ENCODE measurements at regions of chr3 and their contacts with region 1.

Region 1: DNA sequence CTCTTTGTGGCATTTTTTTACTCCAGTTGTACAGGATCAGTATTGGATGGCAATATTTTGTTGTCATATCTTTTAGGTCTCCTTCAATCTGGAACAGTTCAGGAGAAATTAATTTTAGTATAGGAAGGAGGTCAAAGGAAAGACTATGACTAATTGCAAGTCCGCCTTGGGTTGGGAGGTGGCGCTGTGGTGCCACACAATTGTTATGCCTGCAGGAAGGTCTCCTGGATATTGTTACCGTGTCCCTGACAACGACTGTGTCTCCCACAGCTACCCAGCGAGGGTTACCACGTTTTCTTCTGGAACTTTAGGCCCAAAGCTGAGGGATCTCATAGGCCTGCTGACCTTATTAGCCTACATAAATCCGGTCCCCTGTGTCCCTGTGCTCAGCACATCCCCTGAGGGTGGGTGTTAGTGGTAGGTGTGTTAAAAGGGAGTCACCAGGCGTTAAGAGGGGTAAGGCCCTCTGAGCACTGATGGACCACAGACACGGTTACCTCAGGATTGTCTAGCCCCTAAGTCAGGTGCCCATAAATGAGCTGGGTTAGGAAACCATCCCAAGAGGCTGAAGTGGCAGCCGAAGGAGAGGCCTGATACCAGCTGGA is 31.5 kb downstream of the KCNAB1 start:
- DNase-seq: peak in 1 of 2 donors; percentile 28
- ATAC-seq: no peak
- H3K4me3 ChIP-seq: no peak overlapping the region
- H3K27ac ChIP-seq: no peak overlapping the region
- H3K4me1 ChIP-seq: peaks cover 9 to 20% of the 10 kb centered on the region in 2 donors
- H3K27me3 ChIP-seq: no peaks in the 10 kb centered on the region
- CTCF ChIP-seq: peak in 4 of 5 experiments; percentile 31 to 57 (median 46)
- POLR2A ChIP-seq: no peak

Region 2: GRCh38 chr3:156291272-156292123 is 139.6 kb after region 1 on chr3:
- in situ Hi-C with region 1: no loop called
- intact Hi-C with region 1: no loop called
- DNase-seq: peak; percentile 12 to 14
- ATAC-seq: no peak
- H3K4me3 ChIP-seq: peak overlapping the region in 3 of 4 donors; percentile 31 to 48 (median 34)
- H3K27ac ChIP-seq: no peak overlapping the region
- H3K4me1 ChIP-seq: no peaks in the 10 kb centered on the region
- H3K27me3 ChIP-seq: peaks cover 24 to 31% (median 26%) of the 10 kb centered on the region in 3 donors
- CTCF ChIP-seq: no peak
- POLR2A ChIP-seq: no peak

Region 3: DNA sequence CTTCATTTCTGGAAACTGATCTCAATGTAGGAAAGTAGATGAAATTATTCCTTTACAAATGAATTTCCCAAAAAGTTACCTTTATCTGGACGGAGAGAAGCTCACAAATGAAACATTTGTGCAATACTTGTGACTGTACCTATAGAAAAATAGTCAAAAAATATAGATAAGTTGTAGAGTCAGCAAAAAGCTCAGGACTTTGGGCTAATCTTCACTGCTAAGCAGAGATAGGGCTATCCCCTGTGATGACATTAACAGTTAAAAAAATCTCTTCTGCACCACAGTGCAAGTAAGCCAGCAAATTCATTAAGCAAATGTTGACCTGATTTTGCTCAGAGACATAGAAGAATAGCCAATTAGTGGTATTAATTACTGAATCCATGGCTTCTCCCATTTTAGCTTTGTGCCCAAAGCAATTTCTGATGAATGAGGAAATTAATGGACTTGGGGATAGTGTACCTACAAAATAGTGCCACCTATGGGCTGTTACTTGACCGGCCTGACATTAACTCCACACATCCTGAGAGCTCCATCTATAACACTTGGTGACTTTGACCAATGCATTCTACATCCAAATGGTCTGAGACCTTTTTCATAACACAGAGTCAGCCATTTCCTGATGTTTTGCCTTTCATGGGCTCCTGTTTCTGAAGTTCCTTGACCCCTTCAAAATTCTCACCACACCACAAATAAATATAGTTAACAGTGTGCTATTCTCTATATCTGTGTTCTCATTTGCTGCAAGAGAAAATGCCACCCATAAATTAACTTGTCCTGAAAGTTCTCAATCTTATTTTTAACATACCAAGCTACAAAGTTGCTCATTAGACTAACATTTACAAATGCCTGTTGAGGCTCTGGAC is 298.0 kb after region 1 on chr3:
- in situ Hi-C with region 1: no loop called
- intact Hi-C with region 1: loop called (anchors 2 kb)
- DNase-seq: no peak
- ATAC-seq: no peak
- H3K4me3 ChIP-seq: no peak overlapping the region
- H3K27ac ChIP-seq: no peak overlapping the region
- H3K4me1 ChIP-seq: no peaks in the 10 kb centered on the region
- H3K27me3 ChIP-seq: no peaks in the 10 kb centered on the region
- CTCF ChIP-seq: peak in 1 of 5 experiments; percentile 45
- POLR2A ChIP-seq: no peak

Region 4: DNA sequence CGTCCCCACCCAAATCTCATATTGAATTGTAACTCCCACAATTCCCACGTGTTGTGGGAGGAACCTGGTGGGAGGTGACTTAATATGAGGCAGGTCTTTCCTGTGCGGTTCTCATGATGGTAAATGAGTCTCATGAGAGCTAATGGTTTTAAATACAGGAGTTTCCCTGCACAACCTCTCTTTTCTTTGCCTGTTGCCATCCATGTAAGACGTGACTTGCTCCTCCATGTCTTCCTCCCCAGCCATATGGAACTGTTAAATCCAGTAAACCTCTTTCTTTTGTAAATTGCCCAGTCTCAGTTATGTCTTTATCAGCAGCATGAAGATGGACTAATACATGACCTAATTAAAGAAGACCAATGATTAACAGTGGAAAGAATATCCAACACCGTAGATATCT is 346.4 kb after region 1 on chr3:
- in situ Hi-C with region 1: loop called in 3 of 4 experiments (anchors 10 kb)
- intact Hi-C with region 1: loop called (anchors 1 kb)
- DNase-seq: no peak
- ATAC-seq: no peak
- H3K4me3 ChIP-seq: no peak overlapping the region
- H3K27ac ChIP-seq: no peak overlapping the region
- H3K4me1 ChIP-seq: no peaks in the 10 kb centered on the region
- H3K27me3 ChIP-seq: no peaks in the 10 kb centered on the region
- CTCF ChIP-seq: no peak
- POLR2A ChIP-seq: no peak

Region 5: DNA sequence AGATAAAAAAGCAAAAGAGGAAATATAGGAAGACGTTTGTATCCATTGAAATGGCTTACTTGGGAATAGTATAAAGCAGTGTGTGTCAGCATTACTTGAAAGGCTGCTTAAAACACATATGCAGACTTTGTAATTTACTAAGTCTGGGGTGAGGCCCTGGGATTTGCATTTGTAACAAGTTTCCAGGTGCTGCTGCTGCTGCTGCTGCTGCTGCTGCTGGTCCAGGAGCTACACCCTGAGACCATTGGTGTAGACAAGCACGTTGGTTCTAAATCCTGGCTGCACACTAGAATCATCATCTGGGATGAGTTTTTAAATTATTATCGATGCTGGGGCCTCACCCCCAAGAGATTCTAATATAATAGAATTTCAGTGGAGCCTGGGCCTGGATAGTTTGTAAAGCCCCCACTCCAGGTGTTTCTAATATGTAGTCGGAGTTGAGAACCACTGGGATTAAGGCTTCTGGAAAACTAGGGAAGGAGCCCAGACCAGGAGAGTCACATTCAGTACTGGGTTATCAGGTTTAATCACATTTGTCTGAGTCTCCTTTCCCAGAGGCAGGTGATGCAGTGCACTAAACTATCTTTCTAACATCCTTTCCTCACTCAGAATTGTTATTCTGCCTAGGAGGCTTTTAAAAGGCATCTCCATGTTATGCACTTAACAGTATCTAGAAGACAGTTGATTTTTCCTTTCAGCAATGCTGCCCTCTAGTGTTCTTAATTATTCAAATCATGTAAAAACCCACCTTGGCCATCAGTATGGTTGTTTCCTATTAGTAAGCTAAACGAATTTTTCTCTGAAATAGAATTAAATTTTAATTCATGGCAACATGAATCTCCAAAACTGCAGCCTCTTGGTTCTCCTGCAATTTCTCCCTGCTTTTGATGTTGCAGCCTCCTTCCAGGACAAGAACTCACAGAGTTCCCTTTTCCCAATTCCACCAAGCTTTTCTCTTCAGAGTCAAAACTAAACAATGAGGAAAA is 357.6 kb after region 1 on chr3:
- in situ Hi-C with region 1: loop called (anchors 5 to 10 kb)
- intact Hi-C with region 1: loop called (anchors 1 kb)
- DNase-seq: no peak
- ATAC-seq: peak; percentile 74 to 76
- H3K4me3 ChIP-seq: no peak overlapping the region
- H3K27ac ChIP-seq: no peak overlapping the region
- H3K4me1 ChIP-seq: no peaks in the 10 kb centered on the region
- H3K27me3 ChIP-seq: no peaks in the 10 kb centered on the region
- CTCF ChIP-seq: peak; percentile 29 to 63 (median 45)
- POLR2A ChIP-seq: no peak

Region 6: GRCh38 chr3:156535162-156535627 is 383.3 kb after region 1 on chr3:
- in situ Hi-C with region 1: loop called in 1 of 4 experiments (anchors 10 kb)
- intact Hi-C with region 1: loop called (anchors 2 kb)
- DNase-seq: peak; percentile 51 to 66
- ATAC-seq: peak; percentile 96 to 98
- H3K4me3 ChIP-seq: no peak overlapping the region
- H3K27ac ChIP-seq: peak overlapping the region; percentile 45 to 65 (median 56)
- H3K4me1 ChIP-seq: peaks cover 0 to 7% of the 10 kb centered on the region in 2 donors
- H3K27me3 ChIP-seq: no peaks in the 10 kb centered on the region
- CTCF ChIP-seq: no peak
- POLR2A ChIP-seq: peak in 1 of 2 donors; percentile 34

Region 7: GRCh38 chr3:156547637-156548036 is 395.7 kb after region 1 on chr3:
- in situ Hi-C with region 1: loop called in 1 of 4 experiments (anchors 10 kb)
- intact Hi-C with region 1: no loop called
- DNase-seq: no peak
- ATAC-seq: no peak
- H3K4me3 ChIP-seq: no peak overlapping the region
- H3K27ac ChIP-seq: peak overlapping the region in 2 of 4 donors; percentile 6 to 22
- H3K4me1 ChIP-seq: peaks cover 26 to 52% of the 10 kb centered on the region in 2 donors
- H3K27me3 ChIP-seq: no peaks in the 10 kb centered on the region
- CTCF ChIP-seq: no peak
- POLR2A ChIP-seq: no peak